Tibial artery (tissue), 4 donors: ENCODE measurements at regions of chr20 and their contacts with region 1.

Region 1: GRCh38 chr20:6686171-6686570 is 81.3 kb upstream of the BMP2 start:
- DNase-seq: no peak
- H3K4me3 ChIP-seq: no peak overlapping the region
- H3K27ac ChIP-seq: no peak overlapping the region
- H3K4me1 ChIP-seq: no peaks in the 10 kb centered on the region
- H3K27me3 ChIP-seq: no peaks in the 10 kb centered on the region
- CTCF ChIP-seq: no peak

Region 2: DNA sequence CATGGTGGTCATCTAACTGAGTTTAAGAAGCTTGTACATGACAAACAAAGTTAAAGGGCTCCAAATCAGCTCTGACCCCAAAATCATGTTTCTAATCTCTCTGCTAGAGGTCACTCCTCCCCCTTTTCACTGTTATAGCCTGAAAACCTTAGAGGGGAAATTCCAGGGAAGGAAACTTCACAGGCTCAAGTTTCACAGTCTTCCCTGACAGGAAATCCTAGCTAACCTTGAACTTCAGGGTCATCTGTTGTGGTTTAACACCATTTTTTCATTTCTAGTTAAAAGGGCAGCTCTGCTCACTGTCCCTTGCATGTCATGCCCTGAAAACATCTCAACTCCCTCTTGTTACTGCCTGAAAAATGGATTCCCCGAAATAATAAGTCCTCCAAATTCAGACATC is 23.1 kb before region 1 on chr20:
- intact Hi-C with region 1: loop called (anchors 1 kb)
- DNase-seq: no peak
- H3K4me3 ChIP-seq: no peak overlapping the region
- H3K27ac ChIP-seq: no peak overlapping the region
- H3K4me1 ChIP-seq: no peaks in the 10 kb centered on the region
- H3K27me3 ChIP-seq: no peaks in the 10 kb centered on the region
- CTCF ChIP-seq: no peak